ENCODE measurements at regions of chr10 and their contacts with region 1.

Region 1: DNA sequence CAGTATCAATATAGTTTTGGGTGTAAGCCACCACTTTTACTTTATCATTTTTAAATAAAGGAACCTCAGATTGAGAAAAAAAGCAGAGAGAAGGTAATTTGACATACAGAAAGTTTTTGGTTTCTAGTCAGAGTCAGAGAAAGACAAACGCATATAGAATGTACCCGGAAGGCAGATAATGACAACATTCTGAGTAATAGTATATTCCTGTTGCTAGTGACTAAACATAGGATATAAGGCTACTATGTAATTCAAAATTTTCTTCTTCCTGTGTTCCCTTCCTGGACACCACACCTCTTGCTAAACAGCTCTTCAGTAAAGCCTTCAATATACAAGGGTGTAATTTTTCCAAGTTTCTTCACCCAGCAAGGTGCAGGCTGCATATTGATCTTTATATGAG is 597.6 kb downstream of the PCDH15 start:
- DNase-seq: peak; percentile 83
- ATAC-seq: peak; percentile 95
- H3K4me3 ChIP-seq: peak overlapping the region; percentile 27
- H3K27ac ChIP-seq: peak overlapping the region; percentile 70
- H3K4me1 ChIP-seq: peaks cover 20% of the 10 kb centered on the region
- H3K27me3 ChIP-seq: no peaks in the 10 kb centered on the region
- CTCF ChIP-seq: no peak

Region 2: GRCh38 chr10:54124209-54124885 is 79.1 kb before region 1 on chr10:
- CTCF ChIA-PET with region 1: no interaction called
- POLR2A ChIA-PET with region 1: no interaction called
- intact Hi-C with region 1: loop called (anchors 2 kb)
- DNase-seq: peak; percentile 74
- ATAC-seq: peak; percentile 90
- H3K4me3 ChIP-seq: no peak overlapping the region
- H3K27ac ChIP-seq: peak overlapping the region; percentile 18
- H3K4me1 ChIP-seq: peaks cover 7% of the 10 kb centered on the region
- H3K27me3 ChIP-seq: no peaks in the 10 kb centered on the region
- CTCF ChIP-seq: no peak

Region 3: DNA sequence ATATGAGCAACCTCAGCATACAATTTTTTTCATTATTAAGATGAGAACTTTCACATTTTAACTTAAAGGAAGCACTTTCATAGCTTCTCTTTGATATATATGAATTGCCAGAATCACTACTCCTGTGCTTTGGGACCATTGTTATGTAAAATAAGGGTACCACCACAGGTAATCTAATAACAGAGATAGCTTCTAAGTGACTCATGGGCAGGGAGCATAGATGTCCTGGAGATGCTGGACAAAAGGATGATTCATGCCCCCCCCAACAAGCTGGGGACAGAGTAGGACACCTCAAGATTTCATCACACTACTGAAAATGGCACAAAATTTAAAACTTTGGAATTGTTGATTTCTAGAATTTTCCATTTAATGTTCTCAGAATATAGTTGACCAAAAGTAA is 43.5 kb before region 1 on chr10:
- CTCF ChIA-PET with region 1: no interaction called
- POLR2A ChIA-PET with region 1: no interaction called
- intact Hi-C with region 1: no loop called
- DNase-seq: no peak
- ATAC-seq: no peak
- H3K4me3 ChIP-seq: no peak overlapping the region
- H3K27ac ChIP-seq: no peak overlapping the region
- H3K4me1 ChIP-seq: no peaks in the 10 kb centered on the region
- H3K27me3 ChIP-seq: no peaks in the 10 kb centered on the region
- CTCF ChIP-seq: no peak

Region 4: GRCh38 chr10:54826994-54827560 is 623.7 kb after region 1 on chr10:
- CTCF ChIA-PET with region 1: no interaction called
- POLR2A ChIA-PET with region 1: no interaction called
- intact Hi-C with region 1: loop called (anchors 5 kb)
- DNase-seq: peak; percentile 33
- ATAC-seq: peak; percentile 92
- H3K4me3 ChIP-seq: no peak overlapping the region
- H3K27ac ChIP-seq: peak overlapping the region; percentile 6; the same call in 1 of the 2 replicates
- H3K4me1 ChIP-seq: peaks cover 7% of the 10 kb centered on the region; the same call in 1 of the 2 replicates
- H3K27me3 ChIP-seq: no peaks in the 10 kb centered on the region
- CTCF ChIP-seq: no peak

Measured in PC-3 (cell line).